Posterior vena cava (tissue), 2 donors: ENCODE measurements at regions of chr1 and their contacts with region 1.

Region 1: GRCh38 chr1:110455151-110455550 is 4.2 kb downstream of the PROK1 start:
- DNase-seq: peak; percentile 38

Region 2: GRCh38 chr1:109944541-109944940 is 510.6 kb before region 1 on chr1:
- intact Hi-C with region 1: loop called in 1 of 2 experiments (anchors 5 kb)
- DNase-seq: no peak

Region 3: DNA sequence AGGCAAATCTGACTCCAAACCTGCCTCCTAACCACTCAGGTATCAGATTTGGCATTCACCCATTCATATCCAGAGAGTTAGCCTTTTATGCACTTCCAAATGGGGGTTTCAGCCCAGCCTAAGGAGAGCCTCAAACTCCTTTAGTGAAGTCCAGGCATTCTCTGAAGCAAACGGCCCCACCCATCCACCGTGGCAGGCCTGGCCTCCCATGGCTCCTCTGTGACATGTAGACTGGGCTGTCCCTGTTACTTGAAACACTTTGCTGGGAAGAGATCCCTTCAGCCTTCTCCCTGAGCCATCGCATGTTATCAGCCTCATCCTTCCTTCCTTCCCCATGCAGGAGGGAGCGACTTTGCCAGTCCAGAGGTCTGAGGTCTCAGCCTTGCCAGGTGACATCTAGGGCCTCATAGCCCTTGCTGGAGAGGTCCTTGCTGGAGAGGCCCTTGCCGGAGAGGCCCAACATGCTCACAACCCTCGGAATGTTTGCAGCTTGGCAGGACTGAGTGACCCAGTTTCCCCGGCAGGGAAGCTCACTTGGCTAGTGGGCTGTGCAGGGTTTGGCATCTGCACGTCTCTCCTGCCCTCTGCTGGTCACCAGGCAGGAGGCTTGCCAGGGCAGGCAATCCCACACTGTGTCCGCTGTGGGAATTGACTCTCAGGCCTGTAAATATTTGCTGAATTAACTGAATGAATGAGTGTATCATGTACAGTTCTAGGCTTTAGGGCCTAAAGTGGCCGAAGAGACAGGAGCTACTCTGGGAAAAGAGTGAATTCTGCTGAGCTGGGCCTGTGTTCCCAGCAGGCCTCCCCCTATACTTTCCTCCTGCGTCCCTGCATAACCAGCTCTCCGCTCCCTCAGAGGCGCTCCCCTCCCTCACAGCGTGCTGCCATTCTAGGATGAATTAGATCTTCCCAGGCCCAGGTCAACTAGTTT is 142.7 kb before region 1 on chr1:
- intact Hi-C with region 1: loop called (anchors 10 kb)
- DNase-seq: peak; percentile 94

Region 4: DNA sequence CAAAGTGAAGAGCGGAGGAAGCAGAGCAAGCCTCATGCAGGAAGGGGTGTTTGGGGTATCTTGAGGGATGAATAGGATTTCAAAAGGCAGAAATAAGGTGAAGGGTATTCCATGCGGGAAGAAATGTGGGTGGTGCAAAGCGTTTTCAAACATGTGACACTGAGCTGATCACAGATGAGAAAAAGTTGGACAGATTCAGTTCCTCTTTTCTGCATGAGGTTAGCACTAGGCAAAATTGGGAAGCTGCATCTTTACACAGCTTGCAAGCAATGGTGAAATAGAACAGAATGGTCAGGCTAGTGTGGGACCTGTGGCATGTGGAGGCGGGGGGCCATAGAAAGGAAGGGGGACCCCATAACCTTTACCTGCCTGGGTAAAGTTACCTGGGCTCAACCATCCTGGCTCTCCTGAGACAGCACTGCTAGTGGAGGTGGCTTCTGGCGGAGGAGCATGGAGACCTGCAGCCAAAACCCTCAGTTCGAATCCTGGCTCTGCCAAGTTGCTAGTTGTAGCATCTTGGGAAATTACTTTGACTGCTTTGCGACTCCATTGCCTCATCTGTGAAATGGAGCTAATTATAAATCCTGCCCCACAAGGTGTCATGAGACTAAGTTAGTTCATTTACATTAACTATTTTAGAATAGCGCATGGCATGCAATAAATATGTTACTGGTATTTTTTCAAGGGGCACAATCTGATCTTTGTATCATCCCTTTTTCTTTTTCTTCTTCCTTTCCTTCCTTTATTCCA is 47.4 kb after region 1 on chr1:
- intact Hi-C with region 1: no loop called
- DNase-seq: no peak

Region 5: DNA sequence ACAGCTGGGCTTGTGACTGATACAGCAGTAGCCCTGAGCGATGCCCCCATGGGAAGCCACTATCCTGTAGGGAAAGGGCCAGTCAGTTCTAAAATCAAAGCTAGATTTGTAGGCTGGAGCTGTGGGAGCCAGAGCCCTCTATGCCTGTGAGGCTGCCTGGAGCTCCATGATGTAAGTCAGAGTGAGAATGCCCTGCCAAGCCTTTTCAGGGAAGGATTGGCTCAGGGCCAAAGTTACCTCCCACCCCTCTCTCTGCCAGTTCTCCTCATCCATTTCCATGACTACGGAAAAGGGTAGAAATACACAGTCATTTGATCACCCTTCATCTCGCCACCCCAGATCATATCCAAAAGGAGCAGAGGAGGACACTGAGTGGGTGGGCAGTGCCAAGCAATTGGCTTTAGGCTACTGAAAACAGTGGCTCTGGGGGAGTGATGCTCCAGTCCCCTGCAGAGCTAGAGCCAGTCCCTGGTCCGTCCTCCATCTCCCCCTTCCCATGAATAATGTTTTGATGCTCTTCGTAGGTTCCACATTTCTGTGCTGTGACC is 279.1 kb after region 1 on chr1:
- intact Hi-C with region 1: no loop called
- DNase-seq: no peak